BJ (cell line): ENCODE measurements at regions of chr2 and their contacts with region 1.

Region 1: GRCh38 chr2:67012165-67012564 is 385.0 kb upstream of the ETAA1 start:
- DNase-seq: no peak
- H3K4me3 ChIP-seq: no peak overlapping the region
- H3K27me3 ChIP-seq: no peaks in the 10 kb centered on the region
- CTCF ChIP-seq: no peak

Region 2: GRCh38 chr2:66528974-66529724 is 483.0 kb before region 1 on chr2:
- CTCF ChIA-PET with region 1: no interaction called
- POLR2A ChIA-PET with region 1: interaction called, 11 read pairs
- DNase-seq: no peak
- H3K4me3 ChIP-seq: no peak overlapping the region
- H3K27me3 ChIP-seq: no peaks in the 10 kb centered on the region
- CTCF ChIP-seq: no peak